ENCODE measurements at regions of chr14 and their contacts with region 1.

Region 1: GRCh38 chr14:51180577-51180976 is 59.5 kb upstream of the TMX1 start:
- DNase-seq: no peak
- ATAC-seq: no peak
- H3K4me3 ChIP-seq: no peak overlapping the region
- H3K4me3 Mint-ChIP-seq: no peak overlapping the region
- H3K27ac ChIP-seq: no peak overlapping the region
- H3K27ac Mint-ChIP-seq: no peak overlapping the region
- H3K4me1 ChIP-seq: no peaks in the 10 kb centered on the region
- H3K4me1 Mint-ChIP-seq: no peaks in the 10 kb centered on the region
- H3K27me3 ChIP-seq: no peaks in the 10 kb centered on the region
- H3K27me3 Mint-ChIP-seq: peaks cover 10% of the 10 kb centered on the region
- CTCF ChIP-seq: no peak

Region 2: GRCh38 chr14:51116682-51117081 is 63.9 kb before region 1 on chr14:
- CTCF ChIA-PET with region 1: no interaction called
- POLR2A ChIA-PET with region 1: no interaction called
- intact Hi-C with region 1: loop called in 1 of 2 experiments (anchors 2 kb)
- DNase-seq: no peak
- ATAC-seq: no peak
- H3K4me3 ChIP-seq: no peak overlapping the region
- H3K4me3 Mint-ChIP-seq: no peak overlapping the region
- H3K27ac ChIP-seq: no peak overlapping the region
- H3K27ac Mint-ChIP-seq: no peak overlapping the region
- H3K4me1 ChIP-seq: no peaks in the 10 kb centered on the region
- H3K4me1 Mint-ChIP-seq: no peaks in the 10 kb centered on the region
- H3K27me3 ChIP-seq: no peaks in the 10 kb centered on the region
- H3K27me3 Mint-ChIP-seq: no peaks in the 10 kb centered on the region
- CTCF ChIP-seq: no peak

Region 3: GRCh38 chr14:51157012-51157411 is 23.6 kb before region 1 on chr14:
- CTCF ChIA-PET with region 1: no interaction called
- POLR2A ChIA-PET with region 1: no interaction called
- intact Hi-C with region 1: no loop called
- DNase-seq: peak in 2 of 9 experiments; percentile 4 to 8
- ATAC-seq: no peak
- H3K4me3 ChIP-seq: no peak overlapping the region
- H3K4me3 Mint-ChIP-seq: no peak overlapping the region
- H3K27ac ChIP-seq: no peak overlapping the region
- H3K27ac Mint-ChIP-seq: no peak overlapping the region
- H3K4me1 ChIP-seq: no peaks in the 10 kb centered on the region
- H3K4me1 Mint-ChIP-seq: no peaks in the 10 kb centered on the region
- H3K27me3 ChIP-seq: no peaks in the 10 kb centered on the region
- H3K27me3 Mint-ChIP-seq: no peaks in the 10 kb centered on the region
- CTCF ChIP-seq: no peak

Region 4: DNA sequence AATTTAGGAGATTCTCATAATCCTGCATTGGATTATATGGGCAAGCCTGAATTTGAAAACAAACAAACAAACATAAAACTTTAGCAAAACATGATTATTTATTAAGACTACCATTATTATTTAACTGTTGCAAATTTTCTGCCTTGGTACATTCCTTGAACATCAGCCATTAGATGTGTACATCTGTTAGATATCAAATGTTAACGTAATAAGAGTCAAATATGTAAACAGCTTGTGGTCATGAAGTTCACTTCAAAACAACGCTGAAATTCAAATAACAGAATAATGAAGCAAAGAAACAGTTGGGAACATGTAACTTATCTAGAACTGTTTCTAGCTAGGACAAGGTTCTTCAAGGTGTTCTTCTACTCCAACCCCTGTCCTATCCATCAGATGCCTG is 45.2 kb after region 1 on chr14:
- CTCF ChIA-PET with region 1: no interaction called
- POLR2A ChIA-PET with region 1: no interaction called
- intact Hi-C with region 1: loop called in 1 of 2 experiments (anchors 1 kb)
- DNase-seq: no peak
- ATAC-seq: no peak
- H3K4me3 ChIP-seq: no peak overlapping the region
- H3K4me3 Mint-ChIP-seq: no peak overlapping the region
- H3K27ac ChIP-seq: no peak overlapping the region
- H3K27ac Mint-ChIP-seq: no peak overlapping the region
- H3K4me1 ChIP-seq: no peaks in the 10 kb centered on the region
- H3K4me1 Mint-ChIP-seq: no peaks in the 10 kb centered on the region
- H3K27me3 ChIP-seq: no peaks in the 10 kb centered on the region
- H3K27me3 Mint-ChIP-seq: no peaks in the 10 kb centered on the region
- CTCF ChIP-seq: no peak